CD4-positive, alpha-beta T cell (primary cell): ENCODE measurements at regions of chr13 and their contacts with region 1.

Region 1: DNA sequence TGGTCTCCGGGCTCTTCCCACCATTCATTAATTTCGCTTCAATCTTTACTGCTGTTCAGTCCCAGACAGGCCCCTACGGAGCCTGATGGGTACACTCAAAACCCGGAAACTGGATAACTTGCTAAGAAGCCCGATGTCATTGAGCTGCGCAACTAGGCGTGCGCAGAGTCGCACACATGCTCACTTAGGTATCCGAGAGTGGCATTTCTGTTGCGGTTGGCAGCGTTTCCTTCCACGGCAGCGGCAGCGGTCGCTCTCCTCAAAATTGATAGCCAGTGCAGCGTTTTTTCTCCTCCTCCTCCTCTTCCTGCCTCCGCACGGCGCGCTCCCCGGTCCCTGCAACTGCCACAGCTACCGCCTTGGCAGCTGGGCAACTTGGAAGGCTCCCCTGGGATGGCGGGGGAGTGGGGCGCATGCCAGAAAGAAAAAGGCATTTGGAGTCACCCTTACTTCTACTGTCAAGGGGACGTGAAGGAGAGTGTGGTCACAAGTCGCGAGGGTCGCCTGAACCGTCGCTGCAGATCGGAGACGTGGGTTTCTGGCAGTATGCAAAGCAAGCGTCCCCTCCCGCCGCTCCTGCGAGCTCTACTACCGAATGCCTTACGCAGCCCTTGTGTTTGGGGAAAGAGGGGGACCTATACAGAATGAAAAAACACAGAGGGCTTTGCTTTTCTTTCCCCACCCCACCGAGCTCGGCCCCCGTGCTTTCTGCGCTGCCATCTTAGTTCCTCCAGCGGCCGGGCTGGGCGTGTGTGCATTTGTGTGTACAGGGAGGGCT is 2.4 kb upstream of the MYCBP2 start:
- DNase-seq: peak; percentile 73 to 98 (median 86)
- ATAC-seq: peak; percentile 64
- H3K4me3 ChIP-seq: peak overlapping the region; percentile 77
- H3K4me3 Mint-ChIP-seq: peak overlapping the region; percentile 93
- H3K27ac ChIP-seq: peak overlapping the region; percentile 59 to 86
- H3K27ac Mint-ChIP-seq: peak overlapping the region; percentile 91
- H3K4me1 ChIP-seq: peaks cover 11% of the 10 kb centered on the region
- H3K4me1 Mint-ChIP-seq: peaks cover 65% of the 10 kb centered on the region
- H3K27me3 ChIP-seq: no peaks in the 10 kb centered on the region
- H3K27me3 Mint-ChIP-seq: no peaks in the 10 kb centered on the region
- CTCF ChIP-seq: no peak

Region 2: DNA sequence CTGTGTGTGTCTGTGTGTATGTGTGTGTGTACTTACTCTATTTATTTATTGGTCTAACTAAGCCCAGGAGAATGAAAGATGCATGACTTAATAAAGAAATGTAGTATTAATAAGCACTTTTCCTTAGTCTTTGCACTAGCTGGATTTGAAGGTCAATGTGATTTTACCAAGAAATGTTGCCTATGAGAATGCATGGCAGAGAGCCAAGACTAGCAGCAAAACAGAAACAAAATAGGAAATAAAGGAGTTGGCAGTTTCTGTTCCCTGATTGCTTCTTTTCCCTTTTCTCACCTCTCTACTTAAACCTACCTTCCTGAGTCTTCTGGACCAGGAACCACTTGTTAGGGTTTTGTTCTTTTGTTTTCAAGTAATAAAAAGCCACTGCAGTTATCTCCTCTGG is 729.2 kb before region 1 on chr13:
- CTCF ChIA-PET with region 1: no interaction called
- POLR2A ChIA-PET with region 1: no interaction called
- intact Hi-C with region 1: no loop called
- DNase-seq: peak in 1 of 14 experiments; percentile 1
- ATAC-seq: no peak
- H3K4me3 ChIP-seq: no peak overlapping the region
- H3K4me3 Mint-ChIP-seq: no peak overlapping the region
- H3K27ac ChIP-seq: no peak overlapping the region
- H3K27ac Mint-ChIP-seq: no peak overlapping the region
- H3K4me1 ChIP-seq: no peaks in the 10 kb centered on the region
- H3K4me1 Mint-ChIP-seq: no peaks in the 10 kb centered on the region
- H3K27me3 ChIP-seq: no peaks in the 10 kb centered on the region
- H3K27me3 Mint-ChIP-seq: peaks cover 10% of the 10 kb centered on the region
- CTCF ChIP-seq: no peak

Region 3: GRCh38 chr13:76991796-76992547 is 337.4 kb before region 1 on chr13 and contains the start of gene CLN5:
- CTCF ChIA-PET with region 1: no interaction called
- POLR2A ChIA-PET with region 1: interaction called, 17 read pairs
- intact Hi-C with region 1: loop called (anchors 5 to 10 kb)
- DNase-seq: peak; percentile 89 to 99 (median 95)
- ATAC-seq: peak; percentile 85
- H3K4me3 ChIP-seq: peak within 1 kb of the TSS; percentile 72
- H3K4me3 Mint-ChIP-seq: peak within 1 kb of the TSS; percentile 97
- H3K27ac ChIP-seq: peak within 1 kb of the TSS; percentile 89 to 95
- H3K27ac Mint-ChIP-seq: peak within 1 kb of the TSS; percentile 99
- H3K4me1 ChIP-seq: peaks cover 30% of the 10 kb centered on the region
- H3K4me1 Mint-ChIP-seq: peaks cover 60% of the 10 kb centered on the region
- H3K27me3 ChIP-seq: no peaks in the 10 kb centered on the region
- H3K27me3 Mint-ChIP-seq: no peaks in the 10 kb centered on the region
- CTCF ChIP-seq: no peak
- total RNA-seq, gene CLN5: 37.4 to 42.9 TPM

Region 4: DNA sequence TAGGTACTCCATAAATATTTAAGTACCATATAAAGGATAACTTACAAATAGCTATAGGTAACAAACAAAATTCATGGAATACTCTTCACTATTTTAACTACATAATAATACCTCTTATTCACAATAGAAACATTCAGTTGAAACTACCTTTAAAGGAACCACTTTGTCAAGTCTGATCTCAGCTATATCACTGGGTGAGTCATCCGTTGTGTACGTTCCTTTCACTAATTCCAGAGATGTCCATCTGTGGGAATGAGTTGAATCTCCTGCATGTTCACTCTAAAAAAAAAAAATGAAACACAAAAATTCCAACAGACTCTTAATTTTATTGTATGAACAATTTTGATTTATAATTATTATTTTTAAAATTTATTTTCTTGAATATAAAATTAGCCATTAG is 153.0 kb before region 1 on chr13:
- CTCF ChIA-PET with region 1: no interaction called
- POLR2A ChIA-PET with region 1: no interaction called
- intact Hi-C with region 1: no loop called
- DNase-seq: no peak
- ATAC-seq: no peak
- H3K4me3 ChIP-seq: no peak overlapping the region
- H3K4me3 Mint-ChIP-seq: no peak overlapping the region
- H3K27ac ChIP-seq: no peak overlapping the region
- H3K27ac Mint-ChIP-seq: no peak overlapping the region
- H3K4me1 ChIP-seq: no peaks in the 10 kb centered on the region
- H3K4me1 Mint-ChIP-seq: peaks cover 7% of the 10 kb centered on the region
- H3K27me3 ChIP-seq: no peaks in the 10 kb centered on the region
- H3K27me3 Mint-ChIP-seq: no peaks in the 10 kb centered on the region
- CTCF ChIP-seq: no peak

Region 5: GRCh38 chr13:77291774-77292173 is 37.5 kb before region 1 on chr13:
- CTCF ChIA-PET with region 1: no interaction called
- POLR2A ChIA-PET with region 1: interaction called, 7 read pairs
- intact Hi-C with region 1: loop called in 1 of 2 experiments (anchors 5 kb)
- DNase-seq: no peak
- ATAC-seq: no peak
- H3K4me3 ChIP-seq: no peak overlapping the region
- H3K4me3 Mint-ChIP-seq: no peak overlapping the region
- H3K27ac ChIP-seq: no peak overlapping the region
- H3K27ac Mint-ChIP-seq: no peak overlapping the region
- H3K4me1 ChIP-seq: no peaks in the 10 kb centered on the region
- H3K4me1 Mint-ChIP-seq: peaks cover 53% of the 10 kb centered on the region
- H3K27me3 ChIP-seq: no peaks in the 10 kb centered on the region
- H3K27me3 Mint-ChIP-seq: no peaks in the 10 kb centered on the region
- CTCF ChIP-seq: no peak

Region 6: GRCh38 chr13:77316430-77316829 is 12.9 kb before region 1 on chr13:
- CTCF ChIA-PET with region 1: interaction called, 4 read pairs
- POLR2A ChIA-PET with region 1: interaction called, 11 read pairs
- intact Hi-C with region 1: no loop called
- DNase-seq: no peak
- ATAC-seq: no peak
- H3K4me3 ChIP-seq: no peak overlapping the region
- H3K4me3 Mint-ChIP-seq: peak overlapping the region; percentile 46
- H3K27ac ChIP-seq: no peak overlapping the region
- H3K27ac Mint-ChIP-seq: peak overlapping the region; percentile 42
- H3K4me1 ChIP-seq: peaks cover 43% of the 10 kb centered on the region
- H3K4me1 Mint-ChIP-seq: peaks cover 89% of the 10 kb centered on the region
- H3K27me3 ChIP-seq: no peaks in the 10 kb centered on the region
- H3K27me3 Mint-ChIP-seq: no peaks in the 10 kb centered on the region
- CTCF ChIP-seq: no peak

Region 7: GRCh38 chr13:77480066-77480465 is 150.7 kb after region 1 on chr13:
- CTCF ChIA-PET with region 1: interaction called, 30 read pairs
- POLR2A ChIA-PET with region 1: interaction called, 41 read pairs
- intact Hi-C with region 1: loop called (anchors 2 to 5 kb)
- DNase-seq: no peak
- ATAC-seq: no peak
- H3K4me3 ChIP-seq: no peak overlapping the region
- H3K4me3 Mint-ChIP-seq: no peak overlapping the region
- H3K27ac ChIP-seq: no peak overlapping the region
- H3K27ac Mint-ChIP-seq: no peak overlapping the region
- H3K4me1 ChIP-seq: no peaks in the 10 kb centered on the region
- H3K4me1 Mint-ChIP-seq: peaks cover 12% of the 10 kb centered on the region
- H3K27me3 ChIP-seq: no peaks in the 10 kb centered on the region
- H3K27me3 Mint-ChIP-seq: no peaks in the 10 kb centered on the region
- CTCF ChIP-seq: no peak

Region 8: GRCh38 chr13:77506874-77507273 is 177.6 kb after region 1 on chr13:
- CTCF ChIA-PET with region 1: no interaction called
- POLR2A ChIA-PET with region 1: no interaction called
- intact Hi-C with region 1: no loop called
- DNase-seq: no peak
- ATAC-seq: no peak
- H3K4me3 ChIP-seq: no peak overlapping the region
- H3K4me3 Mint-ChIP-seq: no peak overlapping the region
- H3K27ac ChIP-seq: no peak overlapping the region
- H3K27ac Mint-ChIP-seq: no peak overlapping the region
- H3K4me1 ChIP-seq: no peaks in the 10 kb centered on the region
- H3K4me1 Mint-ChIP-seq: peaks cover 9% of the 10 kb centered on the region
- H3K27me3 ChIP-seq: no peaks in the 10 kb centered on the region
- H3K27me3 Mint-ChIP-seq: peaks cover 3% of the 10 kb centered on the region
- CTCF ChIP-seq: no peak

Region 9: DNA sequence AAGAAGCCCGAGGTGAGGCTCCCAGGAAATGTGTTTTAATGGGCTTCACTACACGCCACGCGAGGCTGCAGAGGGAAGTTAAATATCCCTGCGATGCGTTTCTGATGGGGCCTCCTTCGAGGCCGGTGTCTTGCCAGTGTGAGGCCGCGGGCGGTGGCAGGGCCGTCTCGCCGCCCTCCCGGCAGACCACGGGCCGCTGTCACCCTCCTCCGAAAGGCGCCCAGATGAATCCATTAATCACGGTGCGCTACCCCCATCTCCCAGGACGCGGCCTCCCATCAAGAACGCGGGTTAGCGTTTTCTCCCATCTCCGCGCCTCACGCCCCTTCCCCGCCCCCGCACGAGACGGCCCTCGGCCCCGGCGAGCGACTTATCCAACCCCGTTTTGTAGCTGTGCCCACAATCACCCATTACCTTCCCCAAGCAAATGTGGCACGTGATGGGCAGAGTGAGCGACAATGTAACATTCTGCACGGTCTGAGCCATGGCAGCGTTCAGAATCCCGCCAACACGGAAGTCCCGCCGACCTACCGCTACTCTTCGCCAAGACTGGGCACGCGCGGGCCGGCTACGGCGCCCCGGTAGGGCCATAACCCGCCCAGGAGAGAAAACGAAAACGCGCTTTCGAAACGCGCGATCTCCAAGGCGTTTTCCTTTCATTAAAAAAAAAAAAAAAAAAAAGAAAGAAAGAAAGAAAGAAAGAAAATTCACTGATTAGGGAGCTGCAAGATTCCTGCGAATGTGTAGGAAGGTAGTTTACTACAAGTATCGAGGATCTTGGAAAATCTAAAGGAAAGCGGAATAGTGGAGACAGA is 1329.5 kb after region 1 on chr13 and contains the start of gene OBI1:
- CTCF ChIA-PET with region 1: no interaction called
- POLR2A ChIA-PET with region 1: no interaction called
- intact Hi-C with region 1: loop called in 1 of 2 experiments (anchors 5 kb)
- DNase-seq: peak; percentile 83 to 94 (median 87)
- ATAC-seq: peak; percentile 94
- H3K4me3 ChIP-seq: peak within 1 kb of the TSS; percentile 96
- H3K4me3 Mint-ChIP-seq: peak within 1 kb of the TSS; percentile 98
- H3K27ac ChIP-seq: peak within 1 kb of the TSS in 1 of 2 donors; percentile 56
- H3K27ac Mint-ChIP-seq: peak within 1 kb of the TSS; percentile 91
- H3K4me1 ChIP-seq: peaks cover 14% of the 10 kb centered on the region
- H3K4me1 Mint-ChIP-seq: peaks cover 43% of the 10 kb centered on the region
- H3K27me3 ChIP-seq: no peaks in the 10 kb centered on the region
- H3K27me3 Mint-ChIP-seq: no peaks in the 10 kb centered on the region
- CTCF ChIP-seq: no peak
- total RNA-seq, gene OBI1: 2.6 TPM